ENCODE measurements at regions of chrX and their contacts with region 1.

Region 1: GRCh38 chrX:135484641-135485289 is 35.7 kb upstream of the INTS6L start:
- DNase-seq: peak in 7 of 14 experiments; percentile 0 to 72 (median 25)
- ATAC-seq: peak; percentile 49
- H3K4me3 ChIP-seq: no peak overlapping the region
- H3K4me3 Mint-ChIP-seq: no peak overlapping the region
- H3K27ac ChIP-seq: no peak overlapping the region
- H3K27ac Mint-ChIP-seq: no peak overlapping the region
- H3K4me1 ChIP-seq: no peaks in the 10 kb centered on the region
- H3K4me1 Mint-ChIP-seq: no peaks in the 10 kb centered on the region
- H3K27me3 ChIP-seq: no peaks in the 10 kb centered on the region
- H3K27me3 Mint-ChIP-seq: peaks cover 5% of the 10 kb centered on the region
- CTCF ChIP-seq: peak; percentile 69

Region 2: DNA sequence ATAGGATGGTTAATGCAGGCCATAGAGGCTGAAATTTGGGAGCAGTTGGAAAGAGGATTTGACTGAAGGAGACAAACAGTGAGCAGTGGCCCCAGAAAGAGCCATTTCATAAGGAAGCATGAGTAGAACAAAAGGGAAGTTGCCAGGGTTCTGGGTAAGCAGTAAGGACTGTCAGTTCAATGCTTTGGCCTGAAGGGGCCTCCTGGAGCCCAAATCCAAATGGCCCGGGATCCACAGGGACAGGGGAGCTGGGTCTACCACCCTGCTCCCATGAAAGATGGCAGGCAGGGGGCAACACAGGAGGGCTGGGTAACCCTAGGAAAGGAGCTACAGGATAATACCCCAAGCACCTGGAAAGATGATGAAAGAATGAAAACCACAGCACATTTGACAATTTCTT is 31.6 kb after region 1 on chrX:
- CTCF ChIA-PET with region 1: no interaction called
- POLR2A ChIA-PET with region 1: no interaction called
- intact Hi-C with region 1: loop called in 1 of 2 experiments (anchors 2 kb)
- DNase-seq: peak in 1 of 14 experiments; percentile 18
- ATAC-seq: no peak
- H3K4me3 ChIP-seq: no peak overlapping the region
- H3K4me3 Mint-ChIP-seq: no peak overlapping the region
- H3K27ac ChIP-seq: no peak overlapping the region
- H3K27ac Mint-ChIP-seq: no peak overlapping the region
- H3K4me1 ChIP-seq: peaks cover 7% of the 10 kb centered on the region
- H3K4me1 Mint-ChIP-seq: peaks cover 7% of the 10 kb centered on the region
- H3K27me3 ChIP-seq: no peaks in the 10 kb centered on the region
- H3K27me3 Mint-ChIP-seq: no peaks in the 10 kb centered on the region
- CTCF ChIP-seq: no peak

Region 3: DNA sequence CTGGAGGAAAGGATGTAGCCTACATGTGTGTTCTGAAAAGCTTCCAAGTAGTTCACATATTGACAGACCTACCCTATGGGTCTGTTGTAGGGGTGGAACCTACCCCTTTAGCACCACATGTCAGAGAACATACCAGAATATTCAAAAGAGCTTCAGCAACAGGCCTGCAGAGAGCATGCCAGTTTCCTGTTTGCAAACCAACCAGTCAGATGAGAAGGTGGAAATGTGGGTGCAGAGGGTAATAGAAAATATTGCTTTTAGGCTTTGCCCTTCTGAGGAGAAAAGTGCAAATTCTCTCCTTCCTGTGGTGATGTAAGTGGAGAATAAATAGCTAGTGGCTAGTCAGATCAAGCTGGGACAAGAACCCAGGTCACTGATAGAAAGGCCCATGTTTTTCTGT is 52.1 kb after region 1 on chrX:
- CTCF ChIA-PET with region 1: no interaction called
- POLR2A ChIA-PET with region 1: no interaction called
- intact Hi-C with region 1: loop called in 1 of 2 experiments (anchors 10 kb)
- DNase-seq: peak in 3 of 14 experiments; percentile 26 to 31 (median 27)
- ATAC-seq: peak; percentile 85
- H3K4me3 ChIP-seq: no peak overlapping the region
- H3K4me3 Mint-ChIP-seq: peak overlapping the region; percentile 62
- H3K27ac ChIP-seq: peak overlapping the region in 1 of 2 donors; percentile 13
- H3K27ac Mint-ChIP-seq: peak overlapping the region; percentile 77
- H3K4me1 ChIP-seq: peaks cover 13% of the 10 kb centered on the region
- H3K4me1 Mint-ChIP-seq: peaks cover 74% of the 10 kb centered on the region
- H3K27me3 ChIP-seq: no peaks in the 10 kb centered on the region
- H3K27me3 Mint-ChIP-seq: no peaks in the 10 kb centered on the region
- CTCF ChIP-seq: no peak

Region 4: DNA sequence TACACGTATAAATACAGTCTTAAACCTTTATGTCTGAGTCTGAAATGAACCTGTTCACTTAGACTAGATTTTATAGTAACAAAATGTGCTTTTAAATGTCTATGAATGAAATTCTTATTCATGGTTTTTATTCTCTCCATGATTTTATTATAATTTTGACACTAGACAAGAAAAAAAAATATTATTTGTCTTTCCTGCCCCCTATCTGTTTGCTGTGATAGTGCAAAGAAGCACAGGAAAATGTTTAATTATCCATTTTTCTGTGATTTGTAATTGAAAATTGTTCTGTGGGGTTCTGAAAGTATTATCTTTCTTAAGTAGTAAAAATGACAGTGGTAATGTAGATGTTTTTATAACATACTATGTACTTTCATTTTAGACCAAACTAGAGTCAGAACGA is 87.7 kb after region 1 on chrX:
- CTCF ChIA-PET with region 1: interaction called, 3 read pairs
- POLR2A ChIA-PET with region 1: no interaction called
- intact Hi-C with region 1: loop called (anchors 1 kb)
- DNase-seq: peak in 2 of 14 experiments; percentile 4 to 7
- ATAC-seq: no peak
- H3K4me3 ChIP-seq: no peak overlapping the region
- H3K4me3 Mint-ChIP-seq: no peak overlapping the region
- H3K27ac ChIP-seq: no peak overlapping the region
- H3K27ac Mint-ChIP-seq: no peak overlapping the region
- H3K4me1 ChIP-seq: no peaks in the 10 kb centered on the region
- H3K4me1 Mint-ChIP-seq: no peaks in the 10 kb centered on the region
- H3K27me3 ChIP-seq: no peaks in the 10 kb centered on the region
- H3K27me3 Mint-ChIP-seq: no peaks in the 10 kb centered on the region
- CTCF ChIP-seq: peak; percentile 41

Region 5: DNA sequence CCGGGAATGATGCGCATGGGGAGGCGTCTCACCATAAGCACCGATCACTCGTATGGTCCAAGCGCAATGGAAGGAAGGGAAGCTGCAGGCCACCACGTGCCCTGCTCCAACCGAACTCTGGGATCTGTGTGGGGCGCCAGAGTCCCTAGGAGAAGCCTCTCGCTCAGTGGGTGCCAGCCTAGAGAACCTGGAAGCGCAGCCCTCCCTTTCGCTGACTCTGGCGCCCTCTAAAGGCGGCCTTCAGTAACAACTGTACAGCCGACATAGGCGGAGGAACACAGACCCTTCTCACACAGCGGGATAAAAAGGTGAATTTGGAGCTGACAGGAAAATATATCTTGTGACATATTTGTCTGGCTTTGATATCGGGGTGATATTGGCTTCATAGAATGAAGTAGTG is 111.7 kb after region 1 on chrX:
- CTCF ChIA-PET with region 1: no interaction called
- POLR2A ChIA-PET with region 1: no interaction called
- intact Hi-C with region 1: loop called (anchors 1 kb)
- DNase-seq: peak; percentile 11 to 66 (median 33)
- ATAC-seq: peak; percentile 64
- H3K4me3 ChIP-seq: no peak overlapping the region
- H3K4me3 Mint-ChIP-seq: no peak overlapping the region
- H3K27ac ChIP-seq: no peak overlapping the region
- H3K27ac Mint-ChIP-seq: no peak overlapping the region
- H3K4me1 ChIP-seq: no peaks in the 10 kb centered on the region
- H3K4me1 Mint-ChIP-seq: no peaks in the 10 kb centered on the region
- H3K27me3 ChIP-seq: no peaks in the 10 kb centered on the region
- H3K27me3 Mint-ChIP-seq: peaks cover 10% of the 10 kb centered on the region
- CTCF ChIP-seq: peak; percentile 15

Region 6: GRCh38 chrX:135697601-135698000 is 212.8 kb after region 1 on chrX:
- CTCF ChIA-PET with region 1: no interaction called
- POLR2A ChIA-PET with region 1: no interaction called
- intact Hi-C with region 1: loop called in 1 of 2 experiments (anchors 2 kb)
- DNase-seq: peak in 1 of 14 experiments; percentile 5
- ATAC-seq: no peak
- H3K4me3 ChIP-seq: no peak overlapping the region
- H3K4me3 Mint-ChIP-seq: no peak overlapping the region
- H3K27ac ChIP-seq: no peak overlapping the region
- H3K27ac Mint-ChIP-seq: no peak overlapping the region
- H3K4me1 ChIP-seq: no peaks in the 10 kb centered on the region
- H3K4me1 Mint-ChIP-seq: no peaks in the 10 kb centered on the region
- H3K27me3 ChIP-seq: no peaks in the 10 kb centered on the region
- H3K27me3 Mint-ChIP-seq: no peaks in the 10 kb centered on the region
- CTCF ChIP-seq: no peak

Region 7: GRCh38 chrX:135931644-135932487 is 447.1 kb after region 1 on chrX:
- CTCF ChIA-PET with region 1: no interaction called
- POLR2A ChIA-PET with region 1: no interaction called
- intact Hi-C with region 1: loop called (anchors 5 kb)
- DNase-seq: peak in 13 of 14 experiments; percentile 2 to 56 (median 20)
- ATAC-seq: no peak
- H3K4me3 ChIP-seq: no peak overlapping the region
- H3K4me3 Mint-ChIP-seq: no peak overlapping the region
- H3K27ac ChIP-seq: no peak overlapping the region
- H3K27ac Mint-ChIP-seq: no peak overlapping the region
- H3K4me1 ChIP-seq: no peaks in the 10 kb centered on the region
- H3K4me1 Mint-ChIP-seq: no peaks in the 10 kb centered on the region
- H3K27me3 ChIP-seq: no peaks in the 10 kb centered on the region
- H3K27me3 Mint-ChIP-seq: no peaks in the 10 kb centered on the region
- CTCF ChIP-seq: peak; percentile 63

Region 8: GRCh38 chrX:136697156-136697555 is 1212.4 kb after region 1 on chrX:
- CTCF ChIA-PET with region 1: no interaction called
- POLR2A ChIA-PET with region 1: no interaction called
- intact Hi-C with region 1: no loop called
- DNase-seq: peak in 2 of 14 experiments; percentile 18 to 68
- ATAC-seq: peak; percentile 32
- H3K4me3 ChIP-seq: no peak overlapping the region
- H3K4me3 Mint-ChIP-seq: no peak overlapping the region
- H3K27ac ChIP-seq: peak overlapping the region in 1 of 2 donors; percentile 49
- H3K27ac Mint-ChIP-seq: peak overlapping the region; percentile 89
- H3K4me1 ChIP-seq: peaks cover 28% of the 10 kb centered on the region
- H3K4me1 Mint-ChIP-seq: peaks cover 53% of the 10 kb centered on the region
- H3K27me3 ChIP-seq: no peaks in the 10 kb centered on the region
- H3K27me3 Mint-ChIP-seq: no peaks in the 10 kb centered on the region
- CTCF ChIP-seq: no peak